Ascending aorta (tissue), 2 donors: ENCODE measurements at regions of chr13 and their contacts with region 1.

Region 1: DNA sequence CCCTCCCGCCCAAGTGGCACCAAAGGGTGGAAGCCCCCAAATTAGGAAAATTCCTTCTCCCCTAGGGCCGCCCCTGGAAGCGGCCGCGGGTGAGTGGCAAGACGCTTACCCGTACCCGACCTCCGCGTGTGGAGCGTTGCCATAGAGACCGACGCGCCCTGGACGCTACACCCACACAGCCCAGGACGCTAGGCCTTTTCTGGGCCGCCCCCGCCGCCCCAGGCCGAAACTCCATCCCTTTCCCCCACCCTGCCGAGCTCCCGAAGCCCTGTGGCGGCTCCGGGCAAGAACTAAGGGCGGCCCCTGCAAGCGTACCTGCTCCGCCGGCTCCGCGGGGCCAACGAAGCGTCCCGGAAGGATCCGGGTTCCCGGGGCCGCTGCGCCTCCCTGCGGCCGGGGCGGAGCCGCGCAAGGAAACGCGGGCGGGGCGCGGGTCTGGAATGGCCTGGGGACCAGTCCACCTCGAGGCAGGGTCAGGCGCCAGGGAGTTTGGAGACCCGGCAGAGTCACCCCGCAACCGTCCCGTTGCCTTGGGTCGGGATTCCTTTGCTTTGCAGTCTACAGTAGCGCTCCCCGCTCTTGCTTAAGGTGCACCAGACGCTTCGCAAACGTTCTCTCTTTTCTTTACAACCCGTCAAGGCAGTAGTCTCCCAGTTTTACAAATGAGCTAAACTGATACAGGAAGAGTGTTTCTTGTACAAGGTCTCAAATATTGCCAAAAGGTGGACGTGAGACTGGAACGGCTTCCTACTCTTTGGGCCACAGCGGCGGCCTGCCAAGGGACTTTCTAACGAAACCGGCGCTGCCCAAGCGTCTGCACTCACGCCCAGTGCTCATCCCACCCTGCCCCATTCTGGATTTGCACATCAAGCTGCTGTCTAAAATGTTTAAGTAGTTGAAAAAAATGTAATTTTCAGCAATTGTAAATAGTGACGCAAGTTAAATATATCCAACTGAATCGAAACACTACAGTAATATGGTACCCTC is at the start of gene NEK5:
- DNase-seq: peak in 1 of 2 donors; percentile 78
- H3K4me3 ChIP-seq: peak within 1 kb of the TSS; percentile 68 to 78
- H3K27ac ChIP-seq: peak within 1 kb of the TSS; percentile 36 to 41
- H3K4me1 ChIP-seq: peaks cover 0 to 3% of the 10 kb centered on the region in 2 donors
- H3K27me3 ChIP-seq: no peaks in the 10 kb centered on the region
- CTCF ChIP-seq: peak; percentile 44 to 85 (median 75)
- total RNA-seq, gene NEK5: not detected

Region 2: DNA sequence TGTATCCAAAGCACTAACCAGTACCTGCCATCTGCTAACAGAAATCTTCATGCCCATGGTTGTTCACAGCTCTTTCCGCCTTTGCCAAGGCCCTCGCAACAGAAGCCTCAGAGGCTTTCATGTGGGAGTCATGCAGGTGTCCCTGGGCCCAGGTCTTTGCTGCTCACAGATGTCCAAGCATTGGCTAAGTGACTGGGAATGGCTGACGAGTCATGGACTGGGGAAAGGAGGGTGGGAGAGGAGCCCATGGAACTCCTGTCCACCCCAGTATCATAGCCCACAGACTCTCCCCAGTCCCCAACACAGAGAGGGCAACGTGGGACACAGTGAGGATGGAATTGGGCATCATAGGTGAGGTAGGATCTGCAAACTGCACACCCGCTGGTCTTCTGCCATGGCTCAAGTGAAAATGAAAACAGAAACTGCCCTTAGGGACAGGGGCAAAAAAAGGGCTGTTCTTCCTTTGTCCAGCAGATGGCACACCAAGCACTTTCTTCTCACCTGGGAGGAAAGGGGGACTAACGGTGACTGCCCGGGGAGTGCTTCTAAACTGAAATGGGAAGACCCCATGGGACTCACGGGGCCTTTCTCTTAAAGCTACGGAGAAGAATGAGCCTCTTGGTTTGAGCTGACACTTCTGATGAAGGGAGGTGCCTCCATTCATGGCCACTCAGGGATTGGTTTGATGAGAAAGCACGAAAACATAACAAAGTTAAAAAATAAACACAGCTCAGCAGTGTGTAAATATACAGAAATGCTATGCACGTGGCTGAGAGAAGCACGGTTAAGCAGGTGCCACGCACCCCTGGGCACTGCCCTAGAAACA is 314.0 kb before region 1 on chr13:
- intact Hi-C with region 1: loop called (anchors 2 kb)
- DNase-seq: peak in 1 of 2 donors; percentile 76
- H3K4me3 ChIP-seq: peak overlapping the region; percentile 9 to 50
- H3K27ac ChIP-seq: no peak overlapping the region
- H3K4me1 ChIP-seq: peaks cover 0 to 6% of the 10 kb centered on the region in 2 donors
- H3K27me3 ChIP-seq: no peaks in the 10 kb centered on the region
- CTCF ChIP-seq: peak; percentile 57 to 75 (median 71)

Region 3: DNA sequence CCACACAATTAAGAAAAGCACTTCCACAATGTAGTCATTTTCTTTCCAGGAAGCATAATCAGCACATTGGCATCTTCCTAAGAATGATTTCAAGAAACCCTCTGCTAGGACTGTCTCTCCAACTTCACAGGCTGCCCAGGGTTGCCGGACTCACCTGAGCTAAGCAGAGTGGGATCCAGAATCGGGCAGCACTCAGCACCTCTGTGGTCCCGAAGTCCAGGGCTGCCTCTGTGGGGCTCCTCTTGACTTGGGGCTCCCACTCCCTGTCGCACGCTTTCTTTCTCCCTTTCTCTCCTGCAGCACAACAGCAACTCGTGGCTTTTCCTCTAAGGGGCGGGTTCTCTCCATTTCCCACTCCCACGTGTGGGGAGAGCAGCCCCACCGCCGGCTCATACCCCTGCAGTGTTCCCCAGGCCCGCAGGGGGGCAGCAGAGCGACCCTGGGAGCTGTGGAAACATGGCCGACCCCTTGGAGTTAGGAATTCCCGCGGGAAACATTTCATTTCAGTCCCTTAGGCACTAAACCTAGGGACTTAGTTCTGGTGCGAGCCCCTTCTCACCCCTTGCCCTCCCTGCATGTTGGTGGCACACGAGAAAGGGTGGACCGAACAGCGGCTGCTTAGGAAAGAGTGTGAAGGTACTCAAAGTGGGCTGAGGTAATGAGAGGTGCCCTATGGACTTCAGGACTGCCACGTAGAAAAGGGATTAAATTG is 284.0 kb before region 1 on chr13 and contains the start of gene TMEM272:
- intact Hi-C with region 1: loop called (anchors 5 kb)
- DNase-seq: no peak
- H3K4me3 ChIP-seq: no peak within 1 kb of the TSS
- H3K27ac ChIP-seq: no peak within 1 kb of the TSS
- H3K4me1 ChIP-seq: no peaks in the 10 kb centered on the region
- H3K27me3 ChIP-seq: no peaks in the 10 kb centered on the region
- CTCF ChIP-seq: peak; percentile 51 to 74 (median 73)
- total RNA-seq, gene TMEM272: not detected

Region 4: GRCh38 chr13:51895906-51896888 is 232.8 kb before region 1 on chr13:
- intact Hi-C with region 1: loop called (anchors 1 kb)
- DNase-seq: no peak
- H3K4me3 ChIP-seq: no peak overlapping the region
- H3K27ac ChIP-seq: no peak overlapping the region
- H3K4me1 ChIP-seq: no peaks in the 10 kb centered on the region
- H3K27me3 ChIP-seq: no peaks in the 10 kb centered on the region
- CTCF ChIP-seq: peak in 2 of 3 experiments; percentile 34 to 54

Region 5: DNA sequence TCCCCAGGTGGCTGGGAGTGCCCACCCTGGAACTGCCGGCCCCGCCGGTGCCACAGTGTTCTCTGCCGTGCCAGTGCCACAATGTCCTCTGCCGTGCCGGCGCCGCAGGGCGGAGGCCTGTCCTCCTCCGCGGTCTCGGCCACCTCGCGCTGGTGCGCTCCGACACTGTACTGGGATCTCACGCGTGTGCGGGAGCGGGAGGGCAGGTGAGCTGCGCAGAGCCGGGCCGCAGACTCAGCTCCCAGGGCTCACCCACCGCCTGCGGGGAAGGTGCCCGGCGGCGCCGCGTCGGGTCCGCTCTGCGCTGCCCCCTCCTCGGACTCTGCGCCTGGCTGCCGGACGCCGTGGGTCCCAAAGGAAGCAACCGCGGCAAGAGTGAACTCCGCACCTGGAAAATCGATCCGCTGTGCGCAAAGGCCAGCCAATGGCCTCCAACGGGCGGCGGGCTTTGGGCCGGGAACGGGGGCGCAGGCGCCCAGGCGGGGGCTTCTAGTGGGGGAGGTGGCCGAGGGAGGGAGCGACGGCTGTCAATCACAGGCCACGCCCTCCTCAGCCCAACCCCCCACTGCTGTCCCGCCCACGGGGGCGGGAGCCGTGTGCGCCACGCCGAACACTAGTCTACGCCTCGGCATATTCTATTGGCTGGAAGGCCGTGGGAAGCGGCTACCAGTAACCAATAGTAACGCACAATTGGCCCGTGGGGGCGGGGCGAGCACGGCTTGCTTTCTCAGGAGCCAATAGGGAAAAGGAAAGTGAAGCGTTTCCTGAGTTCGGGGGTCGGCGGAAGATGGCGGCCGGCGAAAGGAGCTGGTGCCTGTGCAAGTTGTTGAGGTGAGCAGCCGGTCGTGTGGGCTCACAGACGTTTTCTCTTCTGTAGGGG is 117.1 kb before region 1 on chr13 and contains the start of gene ALG11:
- intact Hi-C with region 1: loop called (anchors 1 kb)
- DNase-seq: peak; percentile 97 to 100
- H3K4me3 ChIP-seq: peak within 1 kb of the TSS; percentile 73 to 75
- H3K27ac ChIP-seq: peak within 1 kb of the TSS; percentile 65 to 70
- H3K4me1 ChIP-seq: peaks cover 0 to 9% of the 10 kb centered on the region in 2 donors
- H3K27me3 ChIP-seq: no peaks in the 10 kb centered on the region
- CTCF ChIP-seq: no peak
- total RNA-seq, gene ALG11: 13.6 TPM